ENCODE measurements at regions of chr5 and their contacts with region 1.

Region 1: GRCh38 chr5:148957591-148958202 is 105.2 kb downstream of the SH3TC2 start:
- DNase-seq: no peak
- ATAC-seq: peak; percentile 39

Region 2: GRCh38 chr5:148826053-148826738 is 131.5 kb before region 1 on chr5 and contains the start of gene ADRB2:
- intact Hi-C with region 1: loop called (anchors 10 kb)
- DNase-seq: peak; percentile 97
- ATAC-seq: peak; percentile 95
- total RNA-seq, gene ADRB2: 5.4 TPM